A673 (cell line): ENCODE measurements at regions of chr9 and their contacts with region 1.

Region 1: DNA sequence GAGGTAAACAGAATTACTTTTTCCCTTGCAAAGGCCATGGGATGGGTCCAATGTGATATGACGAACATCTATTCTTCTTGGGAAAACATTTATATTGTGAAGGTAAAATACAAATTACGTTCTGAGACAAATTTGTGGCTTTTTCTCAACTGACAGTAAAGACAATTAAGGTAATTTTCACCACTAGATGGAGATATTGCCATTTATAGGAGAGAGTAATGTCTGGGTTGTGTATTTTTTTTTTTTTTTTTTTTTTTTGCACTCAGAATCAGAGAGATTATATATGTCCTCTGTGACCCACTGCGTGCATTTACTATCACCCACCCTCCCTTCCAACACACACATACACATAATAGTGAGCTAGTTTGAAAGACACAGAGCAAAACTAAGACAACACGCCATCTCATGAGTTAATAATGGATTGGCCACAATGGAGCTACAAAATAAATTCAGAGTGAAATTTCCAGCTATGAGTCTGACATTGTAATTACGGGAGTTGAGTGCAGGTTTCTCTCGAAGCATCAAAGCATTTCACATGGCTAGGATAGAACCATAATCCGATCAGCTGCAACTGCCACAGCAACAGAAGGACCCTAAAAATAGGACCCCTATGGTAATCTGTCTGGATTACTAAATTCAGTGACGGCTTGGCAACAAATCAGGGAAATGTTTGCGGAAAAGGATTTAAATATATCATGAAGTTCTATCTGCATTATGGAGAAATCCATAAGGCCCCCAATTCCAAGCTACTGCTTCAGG is 49.2 kb downstream of the ANXA1 start:
- DNase-seq: peak; percentile 74
- H3K4me3 ChIP-seq: no peak overlapping the region
- H3K27ac ChIP-seq: no peak overlapping the region
- H3K4me1 ChIP-seq: peaks cover 5% of the 10 kb centered on the region
- H3K27me3 ChIP-seq: no peaks in the 10 kb centered on the region
- CTCF ChIP-seq: peak; percentile 73

Region 2: DNA sequence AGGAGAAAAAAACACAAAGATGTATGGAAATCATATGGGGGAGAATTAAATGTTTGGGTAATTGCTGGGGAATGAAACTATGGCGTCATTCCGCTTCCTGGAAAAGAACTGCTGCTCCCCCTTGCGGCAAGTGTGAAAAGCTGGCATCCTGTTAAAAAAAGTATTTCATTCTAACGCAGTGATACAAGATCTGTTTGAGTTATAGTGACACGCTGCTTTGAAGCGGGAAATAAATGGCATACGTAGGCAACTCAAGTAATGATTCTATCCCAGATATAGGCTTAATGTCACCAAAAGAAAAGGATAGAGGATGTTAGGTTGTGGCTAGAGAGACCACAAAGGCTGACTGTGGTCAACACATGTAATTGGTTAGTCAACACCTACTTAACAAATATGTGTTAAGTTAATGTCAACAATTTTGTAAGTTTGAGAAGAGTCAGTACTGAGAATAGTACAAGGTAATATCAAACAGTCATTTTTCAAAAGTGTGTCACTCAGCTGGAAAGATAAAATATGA is 177.8 kb before region 1 on chr9:
- CTCF ChIA-PET with region 1: interaction called, 5 read pairs
- POLR2A ChIA-PET with region 1: no interaction called
- intact Hi-C with region 1: loop called (anchors 5 kb)
- DNase-seq: peak; percentile 87
- H3K4me3 ChIP-seq: peak overlapping the region; percentile 12
- H3K27ac ChIP-seq: peak overlapping the region; percentile 14
- H3K4me1 ChIP-seq: peaks cover 11% of the 10 kb centered on the region
- H3K27me3 ChIP-seq: no peaks in the 10 kb centered on the region
- CTCF ChIP-seq: peak; percentile 93

Region 3: GRCh38 chr9:73348471-73348870 is 147.6 kb after region 1 on chr9:
- CTCF ChIA-PET with region 1: no interaction called
- POLR2A ChIA-PET with region 1: no interaction called
- intact Hi-C with region 1: no loop called
- DNase-seq: peak; percentile 4
- H3K4me3 ChIP-seq: no peak overlapping the region
- H3K27ac ChIP-seq: no peak overlapping the region
- H3K4me1 ChIP-seq: no peaks in the 10 kb centered on the region
- H3K27me3 ChIP-seq: peaks cover 27% of the 10 kb centered on the region
- CTCF ChIP-seq: no peak

Region 4: GRCh38 chr9:74006935-74007334 is 806.1 kb after region 1 on chr9:
- CTCF ChIA-PET with region 1: no interaction called
- POLR2A ChIA-PET with region 1: no interaction called
- intact Hi-C with region 1: loop called (anchors 5 kb)
- DNase-seq: peak; percentile 25
- H3K4me3 ChIP-seq: no peak overlapping the region
- H3K27ac ChIP-seq: no peak overlapping the region
- H3K4me1 ChIP-seq: no peaks in the 10 kb centered on the region
- H3K27me3 ChIP-seq: no peaks in the 10 kb centered on the region
- CTCF ChIP-seq: peak; percentile 23; the same call in 1 of the 2 replicates

Region 5: GRCh38 chr9:74570879-74571512 is 1370.1 kb after region 1 on chr9:
- CTCF ChIA-PET with region 1: no interaction called
- POLR2A ChIA-PET with region 1: no interaction called
- intact Hi-C with region 1: loop called (anchors 1 kb)
- DNase-seq: peak; percentile 39
- H3K4me3 ChIP-seq: no peak overlapping the region
- H3K27ac ChIP-seq: no peak overlapping the region
- H3K4me1 ChIP-seq: no peaks in the 10 kb centered on the region
- H3K27me3 ChIP-seq: peaks cover 10% of the 10 kb centered on the region
- CTCF ChIP-seq: peak; percentile 73

Region 6: DNA sequence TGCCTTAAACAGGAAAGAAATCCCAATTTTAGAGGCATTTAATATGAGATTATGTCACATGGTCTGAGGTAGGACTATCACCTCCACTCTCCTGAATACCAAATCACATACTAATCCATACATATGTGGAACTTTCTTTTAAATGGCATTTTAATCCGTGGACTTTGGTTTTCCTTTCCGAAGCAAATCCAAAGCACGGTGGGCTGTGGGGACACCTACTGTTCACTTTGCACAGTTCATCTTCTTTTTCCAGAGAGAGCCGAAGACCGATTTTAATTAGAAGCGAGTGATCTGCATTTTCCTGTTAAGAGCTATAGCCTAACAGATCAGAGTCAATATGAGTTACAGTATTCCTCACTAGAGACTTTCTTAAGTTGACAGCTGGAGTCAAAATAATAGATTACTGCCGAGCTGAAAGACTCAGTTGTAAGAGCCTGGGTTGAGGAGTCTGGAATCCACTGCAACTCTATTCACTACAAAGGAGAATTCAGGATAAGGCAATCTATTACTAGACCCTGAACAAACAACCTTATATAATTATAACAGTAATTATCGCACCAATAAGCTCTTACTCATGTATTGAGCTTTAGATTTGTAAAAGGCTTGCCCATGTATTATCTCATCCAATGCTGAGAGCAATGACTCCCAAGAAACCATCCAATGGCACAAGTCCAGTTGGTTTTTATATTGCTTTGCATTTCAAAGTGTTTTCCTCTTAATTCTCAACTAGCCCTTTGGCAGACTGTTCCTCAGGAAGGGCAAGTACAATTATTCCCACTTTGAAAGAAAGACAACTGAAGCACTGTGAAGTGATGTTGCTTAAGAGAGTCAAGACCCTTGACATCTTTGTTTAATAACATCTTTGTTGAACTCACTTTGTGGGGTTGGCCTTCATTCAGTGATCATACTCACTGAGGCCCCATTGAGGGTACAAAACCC is 1542.2 kb after region 1 on chr9:
- CTCF ChIA-PET with region 1: no interaction called
- POLR2A ChIA-PET with region 1: no interaction called
- intact Hi-C with region 1: loop called (anchors 10 kb)
- DNase-seq: peak; percentile 45
- H3K4me3 ChIP-seq: no peak overlapping the region
- H3K27ac ChIP-seq: no peak overlapping the region
- H3K4me1 ChIP-seq: no peaks in the 10 kb centered on the region
- H3K27me3 ChIP-seq: peaks cover 22% of the 10 kb centered on the region
- CTCF ChIP-seq: peak; percentile 75